ENCODE measurements at regions of chr15 and their contacts with region 1.

Region 1: DNA sequence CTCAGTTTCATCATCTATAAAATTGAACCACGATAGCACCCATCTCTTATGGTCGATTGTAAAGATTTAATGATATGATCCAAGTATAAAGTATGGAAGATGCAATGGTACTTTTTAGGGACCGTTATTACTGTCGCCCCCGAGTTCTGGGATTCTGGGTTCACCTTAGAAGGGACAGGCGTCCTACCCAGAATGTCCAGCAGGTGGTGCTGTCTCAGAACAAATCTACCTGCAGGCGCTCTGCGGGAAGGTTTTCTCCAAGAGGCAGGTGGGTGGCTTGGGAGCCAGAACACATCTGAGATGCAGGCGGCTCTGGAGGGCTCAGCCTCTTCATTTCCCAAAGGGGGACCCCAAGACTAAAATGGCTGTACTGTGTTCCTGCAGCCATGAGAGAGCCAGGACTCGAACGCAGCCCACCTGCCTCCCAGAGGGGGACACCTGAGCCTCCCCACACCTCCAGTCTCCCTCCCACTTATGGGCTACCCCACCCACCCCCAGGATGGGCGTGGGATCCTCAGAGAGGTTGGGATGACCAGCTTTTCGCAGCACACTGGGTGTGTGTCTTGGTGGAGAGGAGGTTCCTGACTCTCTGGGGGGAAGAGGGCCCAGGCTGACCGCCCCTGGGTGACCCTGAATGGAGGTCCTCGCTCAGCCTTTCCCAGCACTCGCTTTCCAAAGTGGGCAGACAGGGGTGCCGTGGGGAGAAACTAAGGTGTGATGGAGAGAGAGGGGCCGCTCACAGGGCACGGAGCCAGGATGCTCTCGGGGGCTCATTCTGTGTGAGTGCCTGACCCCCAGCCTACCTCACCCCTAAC is 28.1 kb upstream of the CORO2B start:
- DNase-seq: peak; percentile 49 to 58 (median 55)
- H3K4me3 ChIP-seq: no peak overlapping the region
- H3K4me3 Mint-ChIP-seq: peak overlapping the region in 1 of 8 donors; percentile 14
- H3K27ac ChIP-seq: no peak overlapping the region
- H3K27ac Mint-ChIP-seq: no peak overlapping the region
- H3K4me1 ChIP-seq: no peaks in the 10 kb centered on the region
- H3K4me1 Mint-ChIP-seq: peaks cover 0 to 3% (median 0%) of the 10 kb centered on the region in 4 donors
- H3K27me3 ChIP-seq: peaks cover 4% of the 10 kb centered on the region
- H3K27me3 Mint-ChIP-seq: peaks cover 34 to 45% of the 10 kb centered on the region in 2 donors

Region 2: GRCh38 chr15:68252925-68253534 is 297.7 kb before region 1 on chr15:
- CTCF ChIA-PET with region 1: interaction called, 5 read pairs
- POLR2A ChIA-PET with region 1: no interaction called
- intact Hi-C with region 1: loop called (anchors 1 kb)
- DNase-seq: peak; percentile 48 to 57 (median 55)
- H3K4me3 ChIP-seq: no peak overlapping the region
- H3K4me3 Mint-ChIP-seq: no peak overlapping the region
- H3K27ac ChIP-seq: no peak overlapping the region
- H3K27ac Mint-ChIP-seq: peak overlapping the region in 1 of 7 donors; percentile 29
- H3K4me1 ChIP-seq: peaks cover 5% of the 10 kb centered on the region
- H3K4me1 Mint-ChIP-seq: peaks cover 0 to 4% (median under 1%) of the 10 kb centered on the region in 4 donors
- H3K27me3 ChIP-seq: no peaks in the 10 kb centered on the region
- H3K27me3 Mint-ChIP-seq: peaks cover 0 to 3% of the 10 kb centered on the region in 2 donors

Region 3: GRCh38 chr15:68328443-68328842 is 222.2 kb before region 1 on chr15:
- CTCF ChIA-PET with region 1: no interaction called
- POLR2A ChIA-PET with region 1: no interaction called
- intact Hi-C with region 1: no loop called
- DNase-seq: no peak
- H3K4me3 ChIP-seq: no peak overlapping the region
- H3K4me3 Mint-ChIP-seq: peak overlapping the region in 1 of 8 donors; percentile 49
- H3K27ac ChIP-seq: no peak overlapping the region
- H3K27ac Mint-ChIP-seq: peak overlapping the region in 1 of 7 donors; percentile 32
- H3K4me1 ChIP-seq: peaks cover 4% of the 10 kb centered on the region
- H3K4me1 Mint-ChIP-seq: peaks cover 0 to 14% (median 4%) of the 10 kb centered on the region in 4 donors
- H3K27me3 ChIP-seq: no peaks in the 10 kb centered on the region
- H3K27me3 Mint-ChIP-seq: peaks cover 7 to 39% of the 10 kb centered on the region in 2 donors

Region 4: DNA sequence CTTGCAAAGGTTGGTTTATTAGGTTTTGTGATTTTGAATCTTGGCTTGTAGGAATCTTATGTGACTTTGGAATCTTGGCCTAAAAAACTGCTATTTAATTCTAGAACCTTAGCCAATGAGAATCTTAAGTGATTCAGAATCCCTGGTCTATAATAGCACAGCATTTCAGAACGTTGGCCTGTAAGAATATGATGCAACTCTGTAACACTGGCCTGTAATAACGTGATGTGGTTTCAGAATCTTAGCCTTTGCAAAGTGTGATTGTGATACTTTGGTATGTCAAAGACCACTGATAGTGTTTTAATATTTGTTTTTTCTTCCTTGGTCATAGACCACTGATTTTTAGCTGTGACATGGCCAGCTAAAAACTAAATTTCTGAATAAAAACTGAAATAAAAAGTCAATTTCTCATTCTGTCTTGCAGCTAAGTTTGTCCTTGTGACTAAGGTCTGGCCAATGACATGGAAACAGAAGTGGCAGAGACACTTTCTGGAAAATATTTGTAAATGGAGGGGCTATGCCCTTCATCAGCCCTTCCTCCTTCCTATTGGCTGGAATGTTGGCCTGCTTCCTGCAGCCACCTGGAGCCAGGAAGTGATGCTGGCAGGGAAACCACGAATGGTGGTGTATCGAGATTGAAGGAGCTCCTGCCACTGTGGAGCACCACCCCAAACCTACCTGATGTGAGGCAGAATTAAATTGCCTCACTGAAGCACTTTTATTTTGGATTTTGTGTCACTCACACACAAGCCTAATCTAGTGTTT is 14.2 kb before region 1 on chr15:
- CTCF ChIA-PET with region 1: interaction called, 46 read pairs
- POLR2A ChIA-PET with region 1: interaction called, 4 read pairs
- intact Hi-C with region 1: no loop called
- DNase-seq: no peak
- H3K4me3 ChIP-seq: no peak overlapping the region
- H3K4me3 Mint-ChIP-seq: no peak overlapping the region
- H3K27ac ChIP-seq: no peak overlapping the region
- H3K27ac Mint-ChIP-seq: no peak overlapping the region
- H3K4me1 ChIP-seq: no peaks in the 10 kb centered on the region
- H3K4me1 Mint-ChIP-seq: no peaks in the 10 kb centered on the region
- H3K27me3 ChIP-seq: no peaks in the 10 kb centered on the region
- H3K27me3 Mint-ChIP-seq: peaks cover 21 to 23% of the 10 kb centered on the region in 2 donors

Region 5: DNA sequence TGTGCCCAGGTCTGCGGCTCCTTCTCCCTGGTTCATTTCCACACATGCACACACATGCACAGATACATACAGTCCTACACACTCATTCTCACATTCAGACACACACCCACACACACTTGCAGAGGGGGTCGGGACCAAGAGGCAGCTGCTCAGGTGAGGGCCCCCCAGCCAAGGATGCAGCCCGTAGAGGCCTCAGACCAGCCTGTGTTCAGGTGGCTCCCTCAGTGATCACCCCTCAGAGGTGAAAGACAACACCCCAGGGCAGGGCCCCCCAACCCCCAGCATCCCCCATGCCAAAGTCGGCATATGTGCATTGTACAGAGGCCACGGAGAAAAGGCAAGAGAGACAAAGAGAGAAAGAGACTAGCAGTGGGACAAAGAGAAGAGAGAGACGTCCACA is 22.2 kb after region 1 on chr15:
- CTCF ChIA-PET with region 1: interaction called, 10 read pairs
- POLR2A ChIA-PET with region 1: no interaction called
- intact Hi-C with region 1: no loop called
- DNase-seq: no peak
- H3K4me3 ChIP-seq: no peak overlapping the region
- H3K4me3 Mint-ChIP-seq: no peak overlapping the region
- H3K27ac ChIP-seq: no peak overlapping the region
- H3K27ac Mint-ChIP-seq: peak overlapping the region in 1 of 7 donors; percentile 16
- H3K4me1 ChIP-seq: peaks cover 6% of the 10 kb centered on the region
- H3K4me1 Mint-ChIP-seq: peaks cover 3 to 14% (median 7%) of the 10 kb centered on the region in 4 donors
- H3K27me3 ChIP-seq: peaks cover 18% of the 10 kb centered on the region
- H3K27me3 Mint-ChIP-seq: peaks cover 56 to 63% of the 10 kb centered on the region in 2 donors

Region 6: DNA sequence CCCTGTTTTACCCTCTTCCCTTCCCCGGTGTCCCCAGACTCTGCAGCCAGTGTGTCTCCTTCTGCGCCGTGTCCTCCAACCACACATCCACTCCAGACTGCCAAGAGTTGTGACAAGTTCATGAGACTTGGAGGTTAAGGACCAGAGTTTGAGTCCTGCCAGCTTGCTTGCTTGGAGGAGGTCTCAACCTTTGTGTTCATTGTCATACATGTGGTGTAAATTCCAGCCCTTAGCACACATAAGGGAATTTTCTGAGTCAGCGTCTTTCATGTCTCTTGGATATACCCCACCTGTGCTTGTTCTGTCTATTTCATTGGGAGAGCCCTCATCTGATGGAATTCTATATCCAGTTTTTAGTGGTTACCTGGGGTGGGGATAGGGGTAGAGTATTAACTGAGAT is 41.4 kb after region 1 on chr15:
- CTCF ChIA-PET with region 1: no interaction called
- POLR2A ChIA-PET with region 1: no interaction called
- intact Hi-C with region 1: no loop called
- DNase-seq: no peak
- H3K4me3 ChIP-seq: no peak overlapping the region
- H3K4me3 Mint-ChIP-seq: no peak overlapping the region
- H3K27ac ChIP-seq: no peak overlapping the region
- H3K27ac Mint-ChIP-seq: no peak overlapping the region
- H3K4me1 ChIP-seq: no peaks in the 10 kb centered on the region
- H3K4me1 Mint-ChIP-seq: peaks cover 0 to 6% (median 3%) of the 10 kb centered on the region in 4 donors
- H3K27me3 ChIP-seq: no peaks in the 10 kb centered on the region
- H3K27me3 Mint-ChIP-seq: peaks cover 7 to 19% of the 10 kb centered on the region in 2 donors

Region 7: DNA sequence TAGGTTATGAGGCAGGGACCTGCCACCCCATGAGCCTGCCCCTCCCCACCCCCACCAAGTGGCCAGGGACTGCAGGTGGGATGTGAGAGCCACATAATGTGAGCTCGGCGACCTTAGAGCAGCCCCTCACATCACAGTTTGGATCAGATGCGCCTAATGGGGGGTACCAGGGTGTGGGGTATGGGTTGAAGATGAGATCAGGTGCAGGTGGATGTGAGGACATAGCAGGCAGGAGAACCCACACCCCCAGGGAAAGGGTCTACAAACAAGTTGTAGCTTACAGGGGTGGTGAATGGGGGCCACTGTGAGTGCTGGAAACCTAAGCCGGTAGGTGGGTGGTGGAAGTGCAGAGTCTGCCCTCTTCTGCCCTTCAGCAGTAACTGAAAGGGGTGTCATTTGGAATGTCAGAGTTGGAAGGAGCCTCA is 122.1 kb after region 1 on chr15:
- CTCF ChIA-PET with region 1: interaction called, 22 read pairs
- POLR2A ChIA-PET with region 1: no interaction called
- intact Hi-C with region 1: no loop called
- DNase-seq: no peak
- H3K4me3 ChIP-seq: no peak overlapping the region
- H3K4me3 Mint-ChIP-seq: no peak overlapping the region
- H3K27ac ChIP-seq: no peak overlapping the region
- H3K27ac Mint-ChIP-seq: no peak overlapping the region
- H3K4me1 ChIP-seq: no peaks in the 10 kb centered on the region
- H3K4me1 Mint-ChIP-seq: peaks cover 0 to 5% (median 3%) of the 10 kb centered on the region in 4 donors
- H3K27me3 ChIP-seq: no peaks in the 10 kb centered on the region
- H3K27me3 Mint-ChIP-seq: peaks cover 9 to 19% of the 10 kb centered on the region in 2 donors